Caco-2 (cell line): ENCODE measurements at regions of chr1 and their contacts with region 1.

Region 1: DNA sequence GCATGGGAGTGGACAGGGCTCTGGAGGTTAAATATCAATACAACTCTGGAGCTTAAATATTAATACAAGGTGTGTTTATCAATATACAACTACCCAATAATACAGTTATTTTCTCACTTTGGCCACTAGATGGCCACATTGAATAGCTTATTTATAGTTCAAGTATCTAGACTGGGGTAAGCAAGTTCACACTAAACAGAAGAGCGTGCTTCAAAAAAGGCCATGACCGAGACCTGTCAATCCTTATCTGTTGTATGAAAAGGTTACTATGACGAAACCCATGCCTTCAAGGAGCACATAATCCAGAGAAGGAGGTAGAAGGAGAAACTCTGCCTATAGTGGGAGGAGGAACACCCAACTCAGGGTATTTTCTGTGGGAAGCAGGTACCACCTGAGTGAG is 29.1 kb downstream of the CHML start:
- DNase-seq: peak in 1 of 2 experiments; percentile 56
- H3K4me3 ChIP-seq: no peak overlapping the region
- H3K4me3 Mint-ChIP-seq: no peak overlapping the region
- H3K27ac Mint-ChIP-seq: no peak overlapping the region
- H3K4me1 ChIP-seq: peaks cover 14% of the 10 kb centered on the region
- H3K4me1 Mint-ChIP-seq: peaks cover 18% of the 10 kb centered on the region
- H3K27me3 ChIP-seq: no peaks in the 10 kb centered on the region
- H3K27me3 Mint-ChIP-seq: no peaks in the 10 kb centered on the region
- CTCF ChIP-seq: peak; percentile 8 to 41

Region 2: GRCh38 chr1:241531195-241532161 is 79.6 kb before region 1 on chr1:
- CTCF ChIA-PET with region 1: interaction called, 3 read pairs
- POLR2A ChIA-PET with region 1: no interaction called
- intact Hi-C with region 1: loop called (anchors 1 kb)
- DNase-seq: peak in 1 of 2 experiments; percentile 36
- H3K4me3 ChIP-seq: peak overlapping the region; percentile 41
- H3K4me3 Mint-ChIP-seq: peak overlapping the region; percentile 86
- H3K27ac Mint-ChIP-seq: peak overlapping the region; percentile 31
- H3K4me1 ChIP-seq: no peaks in the 10 kb centered on the region
- H3K4me1 Mint-ChIP-seq: peaks cover 13% of the 10 kb centered on the region
- H3K27me3 ChIP-seq: no peaks in the 10 kb centered on the region
- H3K27me3 Mint-ChIP-seq: peaks cover 13% of the 10 kb centered on the region
- CTCF ChIP-seq: peak; percentile 26 to 49

Region 3: DNA sequence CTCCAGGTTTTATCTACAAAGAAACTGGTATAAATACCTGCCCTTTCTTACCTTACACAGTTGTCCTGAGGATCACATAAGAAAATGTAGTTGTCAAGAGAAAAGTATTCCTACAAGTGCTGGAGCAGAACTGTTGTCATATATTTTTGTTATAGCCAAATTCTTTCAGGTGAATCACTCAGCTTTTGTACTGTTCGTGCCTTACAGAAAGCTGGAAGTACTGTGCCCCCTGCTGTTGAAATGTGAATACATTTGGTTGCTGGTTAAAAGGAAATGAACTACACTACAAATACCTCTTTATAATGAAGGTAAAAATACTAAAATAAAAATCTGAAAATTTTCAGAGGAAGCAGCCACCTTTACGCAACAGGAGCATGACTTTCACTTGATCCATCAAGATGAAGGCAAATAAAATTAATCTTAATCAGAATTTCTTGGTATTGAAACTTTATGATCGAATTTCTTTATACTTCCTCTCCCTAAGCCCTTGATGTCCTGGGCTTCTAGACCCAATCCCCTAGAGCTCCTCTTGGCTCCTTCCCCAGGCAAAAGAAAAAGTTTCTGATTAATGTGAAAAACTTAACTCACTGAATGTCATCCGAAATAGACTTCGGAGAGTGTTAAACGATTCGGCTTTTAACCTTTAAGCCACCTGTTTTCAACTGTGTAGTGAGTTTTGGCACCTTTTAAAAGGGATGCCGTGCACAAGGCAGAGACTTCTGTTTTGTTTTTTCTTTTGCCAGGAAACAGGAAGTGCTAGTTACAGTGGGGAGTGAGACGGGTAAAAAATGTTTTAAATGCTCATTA is 16.6 kb after region 1 on chr1:
- CTCF ChIA-PET with region 1: interaction called, 9 read pairs
- POLR2A ChIA-PET with region 1: no interaction called
- intact Hi-C with region 1: loop called (anchors 1 kb)
- DNase-seq: peak in 1 of 2 experiments; percentile 45
- H3K4me3 ChIP-seq: no peak overlapping the region
- H3K4me3 Mint-ChIP-seq: no peak overlapping the region
- H3K27ac Mint-ChIP-seq: no peak overlapping the region
- H3K4me1 ChIP-seq: peaks cover 5% of the 10 kb centered on the region; the same call in 1 of the 2 replicates
- H3K4me1 Mint-ChIP-seq: peaks cover 9% of the 10 kb centered on the region
- H3K27me3 ChIP-seq: no peaks in the 10 kb centered on the region
- H3K27me3 Mint-ChIP-seq: no peaks in the 10 kb centered on the region
- CTCF ChIP-seq: peak; percentile 51 to 52

Region 4: DNA sequence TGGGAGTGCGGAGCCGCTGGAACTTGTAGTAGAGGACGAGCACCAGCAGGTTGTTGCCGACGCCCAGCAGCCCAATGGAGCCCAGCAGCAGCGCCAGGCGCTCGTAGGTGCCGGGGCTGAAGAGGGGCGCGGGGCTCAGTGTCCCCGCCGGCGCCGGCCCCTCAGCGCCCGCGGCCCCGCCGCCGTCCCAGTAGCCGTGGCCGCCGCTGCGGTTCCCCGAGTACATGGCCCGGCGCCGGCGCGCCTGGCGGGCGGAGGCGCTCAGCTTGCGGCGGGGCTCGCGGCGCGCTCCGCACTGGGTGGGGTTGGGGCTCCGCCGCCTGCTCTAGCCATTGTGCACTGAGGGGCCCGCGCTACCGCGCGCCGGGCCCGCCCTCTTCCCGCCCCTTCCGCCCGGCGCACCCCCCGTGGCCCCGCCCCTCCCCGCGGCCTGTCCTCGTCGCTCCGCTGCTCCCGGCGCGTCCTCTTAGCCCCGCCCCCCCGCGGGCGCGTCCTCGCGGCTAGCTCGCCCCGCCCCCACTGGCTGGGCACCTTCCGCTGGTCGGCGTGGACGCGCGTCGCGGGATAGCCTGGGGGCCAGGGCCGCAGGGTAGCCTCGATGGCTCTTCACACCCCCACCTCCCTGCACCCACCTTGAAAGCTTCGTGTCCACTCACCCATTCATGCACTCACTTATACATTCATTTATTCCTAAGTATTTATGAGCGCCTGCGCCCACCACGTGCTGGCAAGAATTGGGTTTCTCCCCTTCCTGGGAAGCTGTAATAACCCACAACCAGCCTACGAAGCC is 29.2 kb after region 1 on chr1 and contains the starts of genes CHML and OPN3:
- CTCF ChIA-PET with region 1: interaction called, 3 read pairs
- POLR2A ChIA-PET with region 1: no interaction called
- intact Hi-C with region 1: loop called (anchors 2 kb)
- DNase-seq: peak; percentile 92 to 96
- H3K4me3 ChIP-seq: peak within 1 kb of the TSS; percentile 97
- H3K4me3 Mint-ChIP-seq: peak within 1 kb of the TSS; percentile 83
- H3K27ac Mint-ChIP-seq: peak within 1 kb of the TSS; percentile 89
- H3K4me1 ChIP-seq: peaks cover 56% of the 10 kb centered on the region
- H3K4me1 Mint-ChIP-seq: peaks cover 47% of the 10 kb centered on the region
- H3K27me3 ChIP-seq: no peaks in the 10 kb centered on the region
- H3K27me3 Mint-ChIP-seq: no peaks in the 10 kb centered on the region
- CTCF ChIP-seq: no peak
- total RNA-seq, gene CHML: 27.0 and 29.2 TPM in 2 replicates
- total RNA-seq, gene OPN3: 6.9 and 7.8 TPM in 2 replicates

Region 5: GRCh38 chr1:241654019-241654418 is 43.0 kb after region 1 on chr1:
- CTCF ChIA-PET with region 1: no interaction called
- POLR2A ChIA-PET with region 1: no interaction called
- intact Hi-C with region 1: no loop called
- DNase-seq: no peak
- H3K4me3 ChIP-seq: no peak overlapping the region
- H3K4me3 Mint-ChIP-seq: no peak overlapping the region
- H3K27ac Mint-ChIP-seq: no peak overlapping the region
- H3K4me1 ChIP-seq: no peaks in the 10 kb centered on the region
- H3K4me1 Mint-ChIP-seq: no peaks in the 10 kb centered on the region
- H3K27me3 ChIP-seq: no peaks in the 10 kb centered on the region
- H3K27me3 Mint-ChIP-seq: no peaks in the 10 kb centered on the region
- CTCF ChIP-seq: no peak

Region 6: GRCh38 chr1:241684108-241684507 is 73.0 kb after region 1 on chr1:
- CTCF ChIA-PET with region 1: no interaction called
- POLR2A ChIA-PET with region 1: no interaction called
- intact Hi-C with region 1: loop called (anchors 1 kb)
- DNase-seq: no peak
- H3K4me3 ChIP-seq: no peak overlapping the region
- H3K4me3 Mint-ChIP-seq: no peak overlapping the region
- H3K27ac Mint-ChIP-seq: no peak overlapping the region
- H3K4me1 ChIP-seq: no peaks in the 10 kb centered on the region
- H3K4me1 Mint-ChIP-seq: no peaks in the 10 kb centered on the region
- H3K27me3 ChIP-seq: no peaks in the 10 kb centered on the region
- H3K27me3 Mint-ChIP-seq: peaks cover 5% of the 10 kb centered on the region
- CTCF ChIP-seq: no peak

Region 7: DNA sequence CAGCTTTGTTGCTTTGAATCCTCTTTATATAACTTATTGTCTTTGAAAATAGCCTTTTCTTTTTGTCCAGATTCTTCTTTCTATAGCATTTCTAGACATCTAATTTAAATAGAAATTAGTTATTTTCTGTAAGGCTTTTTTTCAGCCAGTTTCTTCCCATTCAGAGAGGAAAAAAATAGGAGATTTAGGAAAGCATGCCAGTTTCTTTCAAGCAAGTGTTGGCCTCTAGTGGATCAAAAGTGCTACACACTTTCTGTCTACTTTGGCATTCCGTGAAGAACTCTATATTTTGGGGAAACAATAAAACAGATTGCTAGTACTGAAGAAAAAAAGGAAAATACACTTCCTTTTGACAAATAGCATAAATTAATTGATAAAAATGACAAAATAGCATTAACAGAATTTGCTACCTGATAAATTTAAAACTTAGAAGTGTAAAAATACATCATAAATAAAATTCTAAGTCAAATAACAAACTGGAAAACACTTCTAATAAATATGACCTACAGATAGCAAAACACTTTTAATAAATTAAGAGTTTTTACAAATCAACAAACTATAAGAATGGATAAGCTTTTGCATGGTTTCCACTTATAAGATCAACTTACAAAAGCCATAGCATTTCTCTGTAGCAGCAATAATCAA is 223.8 kb after region 1 on chr1:
- CTCF ChIA-PET with region 1: interaction called, 3 read pairs
- POLR2A ChIA-PET with region 1: no interaction called
- intact Hi-C with region 1: loop called (anchors 1 kb)
- DNase-seq: peak in 1 of 2 experiments; percentile 23
- H3K4me3 ChIP-seq: no peak overlapping the region
- H3K4me3 Mint-ChIP-seq: no peak overlapping the region
- H3K27ac Mint-ChIP-seq: no peak overlapping the region
- H3K4me1 ChIP-seq: no peaks in the 10 kb centered on the region
- H3K4me1 Mint-ChIP-seq: peaks cover 10% of the 10 kb centered on the region
- H3K27me3 ChIP-seq: no peaks in the 10 kb centered on the region
- H3K27me3 Mint-ChIP-seq: peaks cover 4% of the 10 kb centered on the region
- CTCF ChIP-seq: peak; percentile 68 to 79

Region 8: DNA sequence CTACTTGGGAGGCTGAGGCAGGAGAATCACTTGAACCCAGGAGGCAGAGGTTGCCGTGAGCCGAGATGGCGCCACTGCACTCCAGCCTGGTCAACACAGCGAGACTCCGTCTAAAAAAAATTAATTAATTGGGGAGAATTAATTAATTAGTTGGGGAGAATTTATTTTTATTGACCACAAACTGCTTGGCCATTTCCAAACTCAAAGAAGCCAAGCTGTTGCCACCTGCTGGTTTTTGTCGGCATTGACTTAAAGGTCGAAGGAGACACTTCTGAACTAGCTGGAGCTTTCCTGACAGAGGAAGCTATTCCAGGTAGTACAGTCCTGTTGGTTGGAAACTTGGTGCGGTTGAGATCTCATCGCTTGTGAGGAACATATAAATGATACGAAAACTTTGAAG is 374.7 kb after region 1 on chr1:
- CTCF ChIA-PET with region 1: no interaction called
- POLR2A ChIA-PET with region 1: no interaction called
- intact Hi-C with region 1: loop called (anchors 5 kb)
- DNase-seq: peak; percentile 52 to 60
- H3K4me3 ChIP-seq: no peak overlapping the region
- H3K4me3 Mint-ChIP-seq: no peak overlapping the region
- H3K27ac Mint-ChIP-seq: no peak overlapping the region
- H3K4me1 ChIP-seq: no peaks in the 10 kb centered on the region
- H3K4me1 Mint-ChIP-seq: no peaks in the 10 kb centered on the region
- H3K27me3 ChIP-seq: no peaks in the 10 kb centered on the region
- H3K27me3 Mint-ChIP-seq: no peaks in the 10 kb centered on the region
- CTCF ChIP-seq: peak; percentile 57 to 66